ENCODE measurements at regions of chr6 and their contacts with region 1.

Region 1: GRCh38 chr6:135054569-135055498 is at the start of gene HBS1L:
- DNase-seq: peak; percentile 93 to 98 (median 96)
- ATAC-seq: peak; percentile 97
- H3K4me3 ChIP-seq: peak within 1 kb of the TSS; percentile 96
- H3K4me3 Mint-ChIP-seq: peak within 1 kb of the TSS; percentile 89 to 100 (median 97)
- H3K27ac ChIP-seq: peak within 1 kb of the TSS; percentile 97
- H3K27ac Mint-ChIP-seq: peak within 1 kb of the TSS; percentile 97 to 100 (median 98)
- H3K4me1 ChIP-seq: peaks cover 10 to 13% of the 10 kb centered on the region in 2 donors
- H3K4me1 Mint-ChIP-seq: peaks cover 21 to 51% (median 46%) of the 10 kb centered on the region in 7 donors
- H3K27me3 ChIP-seq: no peaks in the 10 kb centered on the region
- H3K27me3 Mint-ChIP-seq: peaks cover 0 to 3% (median 0%) of the 10 kb centered on the region in 5 donors
- total RNA-seq, gene HBS1L: 70.0 to 112 (median 83.1) TPM

Region 2: DNA sequence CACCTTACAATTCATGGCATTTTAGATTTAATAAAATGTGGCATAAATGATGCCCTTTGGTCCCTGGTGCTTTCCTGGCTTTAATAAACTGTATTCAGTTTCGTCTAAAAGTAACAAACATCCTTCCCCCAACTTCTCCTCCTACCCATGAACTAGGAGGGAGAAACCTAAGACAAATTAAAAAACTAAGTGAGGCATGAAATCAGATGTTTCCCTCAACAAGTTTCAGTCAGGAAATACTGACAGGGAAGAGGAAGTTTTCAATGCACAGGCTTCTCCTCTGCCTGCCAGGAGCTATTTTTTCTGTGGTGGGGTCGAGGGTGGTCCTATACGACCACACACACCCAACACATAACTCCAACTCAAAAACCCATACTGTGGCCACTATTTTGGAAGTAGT is 10.2 kb before region 1 on chr6:
- CTCF ChIA-PET with region 1: interaction called, 4 read pairs
- POLR2A ChIA-PET with region 1: interaction called, 11 read pairs
- intact Hi-C with region 1: no loop called
- DNase-seq: no peak
- ATAC-seq: peak; percentile 10
- H3K4me3 ChIP-seq: no peak overlapping the region
- H3K4me3 Mint-ChIP-seq: peak overlapping the region in 7 of 10 donors; percentile 4 to 56 (median 39)
- H3K27ac ChIP-seq: peak overlapping the region; percentile 58
- H3K27ac Mint-ChIP-seq: peak overlapping the region; percentile 17 to 81 (median 61)
- H3K4me1 ChIP-seq: peaks cover 11 to 36% of the 10 kb centered on the region in 2 donors
- H3K4me1 Mint-ChIP-seq: peaks cover 41 to 83% (median 73%) of the 10 kb centered on the region in 7 donors
- H3K27me3 ChIP-seq: no peaks in the 10 kb centered on the region
- H3K27me3 Mint-ChIP-seq: no peaks in the 10 kb centered on the region

Region 3: DNA sequence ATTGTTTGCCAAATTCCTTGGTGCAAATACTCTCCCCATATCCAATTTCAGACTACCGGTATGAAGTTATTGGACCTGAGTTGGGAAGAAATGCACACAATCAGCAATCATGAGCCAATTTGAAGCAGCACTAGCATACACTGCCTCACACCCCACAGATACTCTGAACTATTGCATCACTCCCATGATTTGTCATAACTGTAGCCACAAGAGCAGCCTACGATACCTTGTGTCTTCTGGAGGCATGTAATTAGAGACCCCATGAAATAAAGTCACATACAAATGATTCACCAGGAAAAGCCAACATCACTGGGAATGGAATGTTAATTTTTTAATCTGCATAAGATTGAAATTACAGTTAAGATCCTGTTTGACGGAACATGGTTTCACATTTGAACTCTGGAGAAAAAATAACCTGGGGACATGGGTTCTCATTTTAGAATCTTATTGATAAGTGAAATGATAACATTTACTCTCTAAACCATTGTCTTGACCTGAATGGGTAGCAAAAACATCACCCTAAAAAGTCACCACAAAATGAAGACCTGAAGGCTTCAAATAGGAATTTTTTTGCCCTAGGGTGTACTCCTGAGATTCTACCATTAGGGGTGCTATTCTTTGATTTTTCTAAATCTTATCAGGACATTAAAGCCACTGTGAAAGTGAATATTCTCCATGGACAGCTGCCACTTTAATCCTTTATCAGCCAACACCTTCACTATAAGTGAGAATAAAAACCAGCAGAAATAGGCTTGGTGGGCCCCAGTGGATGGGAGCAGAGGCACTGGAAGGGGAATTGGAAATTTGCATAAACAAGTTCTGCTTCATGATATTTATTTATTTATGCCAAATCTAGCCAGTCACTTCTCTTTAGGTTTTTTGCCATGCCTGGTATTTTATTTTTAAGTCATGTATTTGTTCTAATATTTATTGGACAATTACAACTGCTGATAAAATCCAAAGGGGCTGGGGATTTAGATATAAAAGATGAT is 34.3 kb after region 1 on chr6:
- CTCF ChIA-PET with region 1: interaction called, 18 read pairs
- POLR2A ChIA-PET with region 1: interaction called, 52 read pairs
- intact Hi-C with region 1: loop called (anchors 1 kb)
- DNase-seq: peak in 4 of 9 donors; percentile 24 to 52 (median 36)
- ATAC-seq: peak; percentile 73
- H3K4me3 ChIP-seq: peak overlapping the region; percentile 50
- H3K4me3 Mint-ChIP-seq: peak overlapping the region; percentile 50 to 86 (median 66)
- H3K27ac ChIP-seq: peak overlapping the region; percentile 69
- H3K27ac Mint-ChIP-seq: peak overlapping the region; percentile 72 to 98 (median 95)
- H3K4me1 ChIP-seq: peaks cover 29 to 63% of the 10 kb centered on the region in 2 donors
- H3K4me1 Mint-ChIP-seq: peaks cover 43 to 98% (median 94%) of the 10 kb centered on the region in 7 donors
- H3K27me3 ChIP-seq: no peaks in the 10 kb centered on the region
- H3K27me3 Mint-ChIP-seq: no peaks in the 10 kb centered on the region

Region 4: GRCh38 chr6:135105710-135106109 is 50.9 kb after region 1 on chr6:
- CTCF ChIA-PET with region 1: interaction called, 7 read pairs
- POLR2A ChIA-PET with region 1: interaction called, 19 read pairs
- intact Hi-C with region 1: loop called in 1 of 2 experiments (anchors 1 kb)
- DNase-seq: no peak
- ATAC-seq: no peak
- H3K4me3 ChIP-seq: no peak overlapping the region
- H3K4me3 Mint-ChIP-seq: peak overlapping the region in 2 of 10 donors; percentile 8 to 83
- H3K27ac ChIP-seq: no peak overlapping the region
- H3K27ac Mint-ChIP-seq: peak overlapping the region in 8 of 9 donors; percentile 77 to 97 (median 90)
- H3K4me1 ChIP-seq: peaks cover 28 to 45% of the 10 kb centered on the region in 2 donors
- H3K4me1 Mint-ChIP-seq: peaks cover 31 to 83% (median 73%) of the 10 kb centered on the region in 7 donors
- H3K27me3 ChIP-seq: no peaks in the 10 kb centered on the region
- H3K27me3 Mint-ChIP-seq: no peaks in the 10 kb centered on the region

Region 5: GRCh38 chr6:135128268-135128914 is 73.6 kb after region 1 on chr6:
- CTCF ChIA-PET with region 1: no interaction called
- POLR2A ChIA-PET with region 1: interaction called, 9 read pairs
- intact Hi-C with region 1: loop called (anchors 1 to 5 kb)
- DNase-seq: peak in 8 of 9 donors; percentile 53 to 73 (median 66)
- ATAC-seq: peak; percentile 92
- H3K4me3 ChIP-seq: peak overlapping the region; percentile 36
- H3K4me3 Mint-ChIP-seq: peak overlapping the region; percentile 46 to 93 (median 77)
- H3K27ac ChIP-seq: peak overlapping the region; percentile 75
- H3K27ac Mint-ChIP-seq: peak overlapping the region; percentile 95 to 98 (median 97)
- H3K4me1 ChIP-seq: peaks cover 18 to 22% of the 10 kb centered on the region in 2 donors
- H3K4me1 Mint-ChIP-seq: peaks cover 26 to 64% (median 55%) of the 10 kb centered on the region in 7 donors
- H3K27me3 ChIP-seq: no peaks in the 10 kb centered on the region
- H3K27me3 Mint-ChIP-seq: no peaks in the 10 kb centered on the region

Region 6: DNA sequence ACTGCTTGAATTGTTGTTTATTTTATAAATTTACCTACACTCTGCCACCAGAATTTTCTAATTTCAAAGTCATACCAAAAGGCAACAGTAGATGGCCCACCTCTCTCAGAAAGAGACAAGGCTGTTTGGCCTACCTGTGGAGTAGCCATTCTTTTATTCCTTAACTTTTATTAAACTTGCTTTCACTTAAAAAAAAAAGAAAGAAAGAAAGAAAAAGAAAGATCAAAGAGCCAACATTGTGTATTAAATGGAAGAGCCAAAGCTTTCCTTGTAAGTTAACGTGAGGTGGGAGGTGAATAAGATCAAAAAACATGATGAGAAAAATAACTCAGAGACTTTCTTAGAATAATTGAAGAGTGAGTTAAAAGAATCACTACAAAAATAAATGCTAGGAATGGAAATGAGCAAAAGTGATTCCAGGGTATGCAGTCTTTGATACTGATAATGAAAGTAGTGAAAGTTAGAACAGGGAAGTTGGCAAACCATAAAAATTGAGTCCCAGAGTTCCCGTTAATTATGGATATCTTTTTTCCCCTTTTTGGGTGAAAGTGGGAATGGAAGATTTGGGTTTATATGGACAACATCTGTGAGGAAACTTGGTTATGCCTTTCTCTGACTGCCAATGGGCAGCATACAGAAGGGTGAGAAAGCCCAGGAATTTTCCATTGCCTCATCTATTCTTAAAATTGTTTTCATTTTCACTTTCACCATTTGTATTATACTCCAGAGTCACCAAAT is 90.4 kb after region 1 on chr6:
- CTCF ChIA-PET with region 1: interaction called, 12 read pairs
- POLR2A ChIA-PET with region 1: interaction called, 25 read pairs
- intact Hi-C with region 1: loop called in 1 of 2 experiments (anchors 1 kb)
- DNase-seq: peak in 6 of 9 donors; percentile 14 to 51 (median 48)
- ATAC-seq: peak; percentile 74
- H3K4me3 ChIP-seq: peak overlapping the region; percentile 23
- H3K4me3 Mint-ChIP-seq: peak overlapping the region in 9 of 10 donors; percentile 39 to 81 (median 61)
- H3K27ac ChIP-seq: peak overlapping the region; percentile 41
- H3K27ac Mint-ChIP-seq: peak overlapping the region; percentile 54 to 91 (median 86)
- H3K4me1 ChIP-seq: peaks cover 0 to 35% of the 10 kb centered on the region in 2 donors
- H3K4me1 Mint-ChIP-seq: peaks cover 28 to 76% (median 56%) of the 10 kb centered on the region in 7 donors
- H3K27me3 ChIP-seq: no peaks in the 10 kb centered on the region
- H3K27me3 Mint-ChIP-seq: no peaks in the 10 kb centered on the region

Measured in naive thymus-derived CD4-positive, alpha-beta T cell (primary cell).